ENCODE measurements at regions of chrX and their contacts with region 1.

Region 1: GRCh38 chrX:71128915-71129765 is 10.7 kb downstream of the MED12 start:
- DNase-seq: peak; percentile 52 to 82 (median 73)
- H3K4me3 ChIP-seq: no peak overlapping the region
- H3K27ac ChIP-seq: no peak overlapping the region
- H3K4me1 ChIP-seq: peaks cover 0 to 2% (median 0%) of the 10 kb centered on the region in 4 experiments
- H3K27me3 ChIP-seq: peaks cover 0 to 2% (median 0%) of the 10 kb centered on the region in 5 experiments

Region 2: GRCh38 chrX:71098302-71098701 is 30.8 kb before region 1 on chrX:
- CTCF ChIA-PET with region 1: interaction called, 109 read pairs
- POLR2A ChIA-PET with region 1: interaction called, 3 read pairs
- DNase-seq: peak; percentile 80 to 88 (median 87)
- H3K4me3 ChIP-seq: no peak overlapping the region
- H3K27ac ChIP-seq: no peak overlapping the region
- H3K4me1 ChIP-seq: peaks cover 0 to 52% (median 34%) of the 10 kb centered on the region in 4 experiments
- H3K27me3 ChIP-seq: peaks cover 0 to 20% (median 0%) of the 10 kb centered on the region in 5 experiments

Region 3: DNA sequence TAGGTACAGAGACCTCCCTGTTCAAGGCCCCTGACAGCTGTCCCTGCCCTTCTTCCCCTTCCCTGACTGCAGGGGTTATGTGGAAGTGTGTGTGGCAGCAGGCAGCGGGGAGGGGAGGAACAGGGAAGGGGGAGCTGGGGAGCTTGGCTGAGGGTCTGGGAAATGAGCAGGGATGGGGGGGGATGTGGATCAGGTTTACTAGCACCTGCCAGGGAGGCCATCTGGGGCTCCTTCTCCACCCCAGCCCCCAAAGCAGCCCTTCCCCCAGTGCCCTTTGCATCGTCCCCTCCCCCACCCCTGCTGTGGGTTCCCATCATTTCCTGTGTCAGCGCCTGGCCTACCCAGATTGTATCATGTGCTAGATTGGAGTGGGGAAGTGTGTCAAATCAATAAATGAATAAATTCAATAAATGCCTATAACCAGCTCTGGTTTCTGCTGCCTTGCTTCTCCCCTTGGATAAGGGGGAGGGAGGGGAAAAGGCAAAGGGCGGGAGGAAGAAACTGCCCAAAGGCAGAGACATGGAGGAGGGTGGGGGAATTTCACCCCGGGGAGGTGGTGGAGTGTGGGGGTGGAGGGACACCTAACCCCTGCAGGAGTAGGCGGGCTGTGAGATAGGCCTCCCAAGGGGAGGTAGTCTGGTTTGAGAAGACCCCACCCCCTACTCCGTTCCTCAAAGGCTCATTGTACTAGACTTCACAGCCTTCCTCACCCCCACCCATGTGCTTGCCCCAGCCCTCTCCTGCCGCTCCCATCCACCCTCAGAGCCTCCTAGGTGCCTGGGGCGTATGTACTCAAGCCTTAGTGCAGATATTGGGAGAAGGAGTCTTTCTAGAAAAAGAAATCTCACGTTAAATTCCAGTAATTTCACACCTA is 25.8 kb before region 1 on chrX:
- CTCF ChIA-PET with region 1: interaction called, 109 read pairs
- POLR2A ChIA-PET with region 1: interaction called, 3 read pairs
- DNase-seq: peak; percentile 60 to 86 (median 84)
- H3K4me3 ChIP-seq: peak overlapping the region in 5 of 7 experiments; percentile 9 to 64 (median 40)
- H3K27ac ChIP-seq: peak overlapping the region; percentile 67 to 82
- H3K4me1 ChIP-seq: peaks cover 16 to 71% (median 61%) of the 10 kb centered on the region in 4 experiments
- H3K27me3 ChIP-seq: peaks cover 0 to 11% (median 0%) of the 10 kb centered on the region in 5 experiments

Region 4: DNA sequence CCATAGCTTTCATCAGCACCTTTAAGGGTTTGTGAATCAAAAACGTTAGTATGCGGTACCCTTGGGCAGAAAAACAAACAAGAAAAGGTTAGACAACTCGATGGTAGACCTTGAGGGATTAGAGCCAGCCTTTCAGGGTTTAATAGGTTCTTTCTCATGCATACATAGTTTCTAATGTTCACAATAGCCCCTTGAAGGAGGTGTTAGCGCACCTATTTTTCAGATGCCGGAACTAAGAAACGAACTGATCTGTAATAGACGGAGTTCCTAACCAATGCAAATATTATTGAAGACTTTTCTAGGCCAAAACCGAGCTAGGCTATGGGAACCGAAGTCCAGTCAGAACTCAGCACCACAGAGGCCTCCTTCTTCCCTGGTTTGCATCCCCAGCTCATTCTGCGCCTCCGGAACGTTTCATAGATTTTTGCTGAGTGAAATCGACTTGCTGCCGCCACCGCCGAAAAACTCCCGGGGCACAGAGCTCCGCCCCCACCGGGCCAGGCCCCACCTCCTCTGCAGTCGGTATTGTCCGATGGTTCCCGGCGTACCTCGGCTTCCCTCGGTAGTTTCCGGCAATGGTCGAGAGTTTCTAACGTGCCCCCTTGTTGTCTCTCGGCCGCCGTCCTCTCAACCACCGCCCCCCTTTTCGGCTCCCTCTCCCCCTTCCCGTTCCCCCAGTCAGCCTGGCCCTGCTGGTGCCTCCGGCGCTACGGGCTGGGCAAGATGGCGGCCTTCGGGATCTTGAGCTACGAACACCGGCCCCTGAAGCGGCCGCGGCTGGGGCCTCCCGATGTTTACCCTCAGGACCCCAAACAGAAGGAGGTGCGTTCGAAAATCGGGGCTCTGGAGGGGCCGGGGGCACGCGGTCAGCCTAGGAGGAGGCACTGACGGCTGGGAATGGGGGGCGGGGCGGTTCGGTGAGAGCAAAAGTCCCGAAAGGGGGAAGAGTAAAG is 10.8 kb before region 1 on chrX and contains the start of gene MED12:
- CTCF ChIA-PET with region 1: interaction called, 31 read pairs
- POLR2A ChIA-PET with region 1: no interaction called
- DNase-seq: peak; percentile 85 to 93 (median 93)
- H3K4me3 ChIP-seq: peak within 1 kb of the TSS; percentile 49 to 85 (median 66)
- H3K27ac ChIP-seq: peak within 1 kb of the TSS; percentile 68 to 88
- H3K4me1 ChIP-seq: peaks cover 7 to 18% (median 12%) of the 10 kb centered on the region in 4 experiments
- H3K27me3 ChIP-seq: no peaks in the 10 kb centered on the region

Region 5: DNA sequence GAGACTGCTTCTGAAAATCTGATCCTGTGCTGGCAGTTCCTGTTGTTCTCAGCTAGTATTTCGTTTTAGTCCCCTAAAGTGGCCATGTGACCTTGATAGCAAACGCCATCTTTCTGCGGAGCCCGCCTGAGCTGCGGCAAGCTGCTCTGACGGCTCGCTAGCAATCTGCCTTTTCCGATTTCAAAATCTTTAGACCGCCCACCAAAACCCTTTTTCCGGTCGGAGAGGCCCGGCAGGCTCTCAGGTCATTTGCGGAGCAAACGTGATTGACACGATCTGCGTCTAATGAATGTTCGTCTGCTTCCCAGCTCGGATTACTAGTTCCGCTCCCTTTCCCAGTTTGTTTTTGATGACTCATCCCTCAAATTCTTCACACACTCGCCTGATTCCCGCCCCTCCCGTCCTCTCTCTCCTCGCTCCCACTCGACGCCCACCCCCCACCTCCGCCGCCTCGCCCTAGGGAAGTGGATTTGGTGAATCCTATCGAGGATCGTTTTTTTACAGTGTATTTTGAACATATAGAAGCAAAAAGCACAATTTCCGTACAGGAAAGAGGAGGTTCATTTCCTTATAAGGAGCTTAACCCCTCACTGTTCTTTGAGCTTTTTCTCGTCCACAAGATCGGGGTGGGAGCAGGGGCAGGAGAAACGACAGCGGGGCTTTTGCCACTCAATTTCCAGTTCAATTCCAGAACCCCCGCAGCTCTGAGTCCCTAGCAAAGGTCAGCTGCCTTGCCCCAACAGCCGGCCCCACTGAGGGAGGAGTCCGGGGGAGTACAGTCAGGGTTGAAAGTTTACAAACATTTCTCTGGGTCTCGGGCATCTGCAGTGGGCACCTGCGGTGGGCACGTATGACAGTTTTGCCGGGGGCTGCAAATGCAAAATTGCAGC is 53.0 kb after region 1 on chrX:
- CTCF ChIA-PET with region 1: interaction called, 13 read pairs
- POLR2A ChIA-PET with region 1: no interaction called
- DNase-seq: peak; percentile 92 to 96 (median 96)
- H3K4me3 ChIP-seq: peak overlapping the region; percentile 14 to 79 (median 57)
- H3K27ac ChIP-seq: peak overlapping the region; percentile 93 to 97
- H3K4me1 ChIP-seq: peaks cover 4 to 14% (median 9%) of the 10 kb centered on the region in 4 experiments
- H3K27me3 ChIP-seq: no peaks in the 10 kb centered on the region

Region 6: GRCh38 chrX:71250841-71251240 is 121.7 kb after region 1 on chrX:
- CTCF ChIA-PET with region 1: no interaction called
- POLR2A ChIA-PET with region 1: no interaction called
- DNase-seq: no peak
- H3K4me3 ChIP-seq: peak overlapping the region in 3 of 7 experiments; percentile 15 to 92 (median 71)
- H3K27ac ChIP-seq: peak overlapping the region in 1 of 2 experiments; percentile 39
- H3K4me1 ChIP-seq: peaks cover 0 to 32% (median 29%) of the 10 kb centered on the region in 4 experiments
- H3K27me3 ChIP-seq: no peaks in the 10 kb centered on the region

Measured in common myeloid progenitor, CD34-positive (primary cell).